ENCODE measurements at regions of chr13 and their contacts with region 1.

Region 1: DNA sequence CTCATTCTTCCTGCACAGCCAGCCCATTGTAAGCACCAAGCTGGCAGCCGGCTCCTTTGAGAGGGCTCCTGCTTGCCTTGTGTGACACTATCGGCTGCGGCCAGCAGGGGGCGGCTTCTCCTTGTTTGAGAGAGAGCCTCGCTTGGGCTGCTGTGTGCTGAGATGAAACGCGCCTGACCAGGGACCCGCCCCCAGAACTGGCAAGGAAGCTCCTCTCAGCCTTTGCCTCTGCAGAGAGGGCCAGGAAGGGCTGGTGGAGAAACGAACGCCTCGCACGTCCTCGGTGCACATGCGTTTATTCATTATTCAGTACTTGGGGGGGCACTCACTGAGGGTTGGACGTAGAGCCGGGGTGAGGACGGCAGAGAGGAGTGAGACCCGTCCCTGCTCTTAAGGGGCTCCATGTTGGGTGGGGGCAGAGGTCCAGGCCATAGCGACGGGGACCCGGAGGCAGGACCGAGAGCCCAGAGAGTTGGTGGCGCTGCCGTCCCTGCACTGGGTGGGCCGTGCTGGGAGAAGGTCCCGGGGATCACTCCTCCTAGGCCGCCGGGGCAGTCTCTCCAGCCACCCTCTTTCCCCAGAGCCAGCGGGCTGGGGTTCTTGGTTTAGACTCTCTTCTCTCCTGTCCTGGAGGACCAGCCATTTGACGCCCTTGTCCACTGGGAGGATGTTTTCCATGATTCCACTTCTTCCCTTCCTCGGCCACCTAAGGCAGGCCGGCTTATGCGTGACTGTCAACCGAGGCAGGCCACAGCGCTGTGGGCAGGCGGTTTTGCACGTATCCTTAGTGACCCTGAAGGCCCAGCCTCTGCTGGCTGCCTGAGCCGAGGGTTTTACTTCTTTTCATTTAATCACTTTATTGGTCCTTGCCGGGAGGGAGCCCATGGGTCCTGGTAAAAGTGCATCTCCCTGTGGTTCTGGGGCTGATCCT is 174.5 kb downstream of the KATNAL1 start:
- DNase-seq: peak; percentile 100
- H3K4me3 ChIP-seq: no peak overlapping the region
- H3K27ac ChIP-seq: peak overlapping the region; percentile 5
- H3K4me1 ChIP-seq: peaks cover 6% of the 10 kb centered on the region
- H3K27me3 ChIP-seq: no peaks in the 10 kb centered on the region
- CTCF ChIP-seq: peak; percentile 93

Region 2: DNA sequence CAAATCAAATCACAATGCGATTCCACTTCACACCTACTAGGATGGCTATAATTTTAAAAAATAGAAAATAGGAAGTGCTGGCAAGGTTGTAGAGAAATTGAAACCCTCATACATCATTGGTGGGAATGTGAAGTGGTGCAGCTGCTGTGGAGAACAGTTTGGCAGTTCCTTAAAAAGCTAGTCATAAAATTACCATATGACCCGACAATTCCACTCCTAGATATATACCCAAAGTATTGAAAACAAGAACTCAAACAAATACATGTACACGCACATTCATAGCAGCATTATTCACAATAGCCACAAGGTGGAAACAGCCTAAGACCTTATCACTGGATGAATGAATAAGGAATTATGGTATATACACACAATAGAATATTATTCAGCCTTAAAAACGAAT is 320.8 kb after region 1 on chr13:
- intact Hi-C with region 1: loop called (anchors 10 kb)
- DNase-seq: no peak
- H3K4me3 ChIP-seq: no peak overlapping the region
- H3K27ac ChIP-seq: no peak overlapping the region
- H3K4me1 ChIP-seq: no peaks in the 10 kb centered on the region
- H3K27me3 ChIP-seq: no peaks in the 10 kb centered on the region
- CTCF ChIP-seq: no peak

Region 3: DNA sequence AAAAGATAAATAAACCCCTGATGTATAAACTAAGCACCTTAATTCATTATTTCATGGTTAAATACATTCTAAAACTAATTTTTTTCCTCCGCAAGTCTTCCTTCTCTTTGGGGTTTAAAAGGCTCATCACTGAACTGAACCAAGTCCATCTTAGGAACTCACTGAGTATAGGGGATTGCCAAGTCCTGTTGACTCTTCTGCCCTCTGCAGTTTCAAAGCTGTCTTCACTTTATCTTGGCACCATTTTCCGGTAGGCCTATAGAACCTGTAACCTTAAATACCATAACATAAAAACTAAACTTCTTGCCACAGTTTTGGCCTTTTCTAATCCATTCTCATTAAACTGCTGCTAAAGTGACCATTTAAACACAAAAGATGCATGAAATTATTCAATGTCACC is 418.3 kb after region 1 on chr13:
- intact Hi-C with region 1: loop called (anchors 10 kb)
- DNase-seq: no peak
- H3K4me3 ChIP-seq: no peak overlapping the region
- H3K27ac ChIP-seq: no peak overlapping the region
- H3K4me1 ChIP-seq: no peaks in the 10 kb centered on the region
- H3K27me3 ChIP-seq: no peaks in the 10 kb centered on the region
- CTCF ChIP-seq: peak; percentile 21

Region 4: DNA sequence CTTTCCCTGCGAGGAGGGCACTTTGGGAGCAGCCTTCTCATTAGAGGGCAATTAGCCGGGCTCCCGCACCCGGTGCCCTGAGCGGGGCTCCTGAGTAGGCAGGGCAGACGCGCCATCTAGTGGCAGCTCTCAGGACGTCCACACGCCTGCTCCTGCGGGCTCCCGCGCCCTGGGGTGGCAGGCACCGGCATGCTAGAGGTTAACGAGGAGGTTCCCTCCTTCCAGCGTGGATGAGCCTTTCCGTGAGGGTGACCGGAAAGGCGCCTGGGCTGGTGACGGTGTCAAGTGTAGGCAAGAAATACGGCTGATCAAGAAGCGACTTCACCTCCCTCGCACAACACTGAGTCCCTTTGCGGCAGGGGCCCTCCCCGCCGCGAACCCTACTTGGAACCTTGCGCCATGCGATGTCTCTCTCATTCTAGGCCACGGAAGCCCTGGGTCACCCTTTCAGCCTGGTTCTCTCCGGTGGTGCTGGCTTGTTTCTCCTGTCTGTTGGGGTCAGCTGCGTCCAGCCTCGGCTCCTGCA is 670.1 kb after region 1 on chr13:
- intact Hi-C with region 1: loop called (anchors 5 kb)
- DNase-seq: peak; percentile 87
- H3K4me3 ChIP-seq: no peak overlapping the region
- H3K27ac ChIP-seq: no peak overlapping the region
- H3K4me1 ChIP-seq: no peaks in the 10 kb centered on the region
- H3K27me3 ChIP-seq: no peaks in the 10 kb centered on the region
- CTCF ChIP-seq: peak; percentile 95

Region 5: DNA sequence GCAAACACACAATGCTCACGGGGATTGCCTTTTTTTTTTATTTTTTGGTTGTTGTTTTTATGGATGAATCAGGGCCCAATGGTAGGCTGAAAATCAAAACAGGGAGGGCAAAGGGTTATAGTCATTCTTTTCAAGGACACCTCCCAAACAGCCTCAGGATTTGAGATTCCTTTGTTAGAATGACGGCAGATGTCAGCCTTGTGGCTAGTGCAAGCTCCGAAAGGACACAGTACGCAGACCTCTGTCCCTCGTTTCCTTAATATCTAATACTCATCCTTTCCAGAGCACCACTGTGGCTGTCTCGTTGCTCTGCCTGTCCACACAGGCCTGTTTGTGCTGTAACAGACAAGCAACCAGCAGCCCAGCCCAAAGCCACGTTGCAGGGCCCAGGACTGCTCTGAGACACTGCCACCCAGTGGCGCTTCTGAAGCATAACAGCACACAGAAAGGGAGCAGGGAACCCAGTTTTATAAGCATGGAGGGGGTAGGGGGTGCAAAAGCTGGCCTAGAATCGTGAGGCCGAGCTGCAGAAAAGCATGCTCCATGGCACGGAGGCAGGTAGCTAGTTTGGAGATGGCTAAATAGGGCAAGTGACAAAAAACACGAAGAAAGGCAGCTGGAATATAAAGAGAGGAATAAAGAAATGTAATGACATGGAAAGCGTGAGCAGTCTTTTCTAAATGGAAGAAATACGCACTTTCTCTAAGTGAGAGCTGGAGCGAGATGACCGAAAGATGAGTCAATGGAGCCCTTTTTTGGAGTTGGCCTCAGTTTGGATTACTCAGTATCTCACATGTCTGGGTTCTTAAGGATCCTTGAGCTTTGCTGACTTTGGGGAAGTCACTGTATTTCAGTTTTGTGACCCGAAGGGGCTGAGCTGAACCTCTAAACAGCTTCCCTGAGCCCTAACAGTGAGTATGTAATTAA is 732.5 kb after region 1 on chr13:
- intact Hi-C with region 1: loop called (anchors 10 kb)
- DNase-seq: peak; percentile 72
- H3K4me3 ChIP-seq: no peak overlapping the region
- H3K27ac ChIP-seq: peak overlapping the region; percentile 63
- H3K4me1 ChIP-seq: no peaks in the 10 kb centered on the region
- H3K27me3 ChIP-seq: no peaks in the 10 kb centered on the region
- CTCF ChIP-seq: peak; percentile 90

Region 6: GRCh38 chr13:31119966-31120700 is 987.2 kb after region 1 on chr13:
- intact Hi-C with region 1: no loop called
- DNase-seq: no peak
- H3K4me3 ChIP-seq: no peak overlapping the region
- H3K27ac ChIP-seq: no peak overlapping the region
- H3K4me1 ChIP-seq: no peaks in the 10 kb centered on the region
- H3K27me3 ChIP-seq: no peaks in the 10 kb centered on the region
- CTCF ChIP-seq: no peak

Measured in colonic mucosa (tissue), 4 donors.